SK-N-SH (cell line): ENCODE measurements at regions of chr9 and their contacts with region 1.

Region 1: DNA sequence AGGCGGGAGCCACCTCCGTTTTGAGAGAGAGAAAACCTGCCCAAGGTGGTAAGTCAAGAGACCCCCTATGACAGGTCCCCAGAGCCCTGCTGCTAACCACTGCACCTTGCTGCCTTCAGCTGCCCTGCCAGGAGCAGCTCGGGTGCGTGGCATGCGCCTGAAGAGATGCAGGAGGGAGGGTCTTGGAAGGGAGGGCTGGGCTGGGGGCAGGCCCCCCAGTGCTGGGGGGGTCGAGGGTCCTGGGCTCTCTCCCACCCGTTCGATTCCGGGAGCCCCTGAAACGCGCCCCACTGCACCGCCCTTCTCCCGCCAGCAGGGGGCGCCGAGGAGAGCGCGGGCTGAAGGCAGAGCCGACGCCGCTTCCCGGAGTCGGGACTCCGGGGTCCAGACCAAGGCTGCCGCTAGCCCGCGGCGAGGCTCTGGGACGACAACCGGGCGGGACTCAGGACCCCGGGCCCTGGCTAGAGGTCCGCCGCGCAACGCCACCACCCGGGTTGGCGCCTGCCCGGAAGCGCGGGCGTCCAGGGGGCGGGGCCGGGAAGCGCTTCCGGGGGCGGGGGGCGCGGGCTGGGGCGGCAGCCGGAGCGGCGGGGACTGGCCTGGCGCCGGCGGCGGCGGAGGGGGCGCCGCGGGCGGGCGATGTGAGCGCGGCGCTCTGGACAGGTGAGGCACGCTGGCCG is at the start of gene ZBTB34:
- DNase-seq: peak; percentile 96
- H3K4me3 ChIP-seq: peak within 1 kb of the TSS; percentile 90 to 96
- H3K27ac ChIP-seq: peak within 1 kb of the TSS; percentile 50 to 85
- H3K4me1 ChIP-seq: peaks cover 0 to 20% of the 10 kb centered on the region in 2 experiments; a peak in 2 of 4 replicates
- H3K27me3 ChIP-seq: peaks cover 5% of the 10 kb centered on the region; the same call in 1 of the 2 replicates
- CTCF ChIP-seq: peak; percentile 97
- EP300 ChIP-seq: no peak
- RAD21 ChIP-seq: 0 out of 2 replicates have a peak, but pooled peaks have one; percentile 4
- polyA plus RNA-seq, gene ZBTB34: 2.9 and 4.1 TPM in 2 replicates

Region 2: DNA sequence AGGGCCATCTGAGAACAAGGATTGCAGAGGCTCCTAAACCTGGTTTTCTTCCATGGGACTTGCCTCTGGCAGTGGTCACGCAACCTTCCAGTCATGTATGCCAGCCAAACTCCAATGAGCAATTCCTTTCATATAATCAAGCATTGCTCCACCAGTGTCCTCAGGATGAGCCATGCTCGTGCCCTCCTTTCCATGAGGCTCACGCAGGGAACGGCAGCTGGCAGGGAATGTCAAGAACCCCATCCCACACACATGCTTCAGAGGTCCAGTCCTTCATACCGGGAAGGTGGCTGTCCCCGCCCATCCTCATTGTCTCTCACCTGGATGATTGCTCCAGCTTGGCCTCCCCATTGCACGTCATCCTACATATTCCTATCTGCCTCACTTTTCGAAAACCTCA is 13.2 kb before region 1 on chr9:
- CTCF ChIA-PET with region 1: interaction called, 25 read pairs
- POLR2A ChIA-PET with region 1: interaction called, 6 read pairs
- DNase-seq: no peak
- H3K4me3 ChIP-seq: no peak overlapping the region
- H3K27ac ChIP-seq: no peak overlapping the region
- H3K4me1 ChIP-seq: peaks cover 0 to 11% of the 10 kb centered on the region in 2 experiments; a peak in 1 of 4 replicates
- H3K27me3 ChIP-seq: no peaks in the 10 kb centered on the region; the same call in 1 of the 2 replicates
- CTCF ChIP-seq: no peak
- EP300 ChIP-seq: no peak
- RAD21 ChIP-seq: no peak

Region 3: GRCh38 chr9:126872516-126872915 is 12.3 kb after region 1 on chr9:
- CTCF ChIA-PET with region 1: interaction called, 10 read pairs
- POLR2A ChIA-PET with region 1: no interaction called
- DNase-seq: no peak
- H3K4me3 ChIP-seq: no peak overlapping the region
- H3K27ac ChIP-seq: no peak overlapping the region
- H3K4me1 ChIP-seq: no peaks in the 10 kb centered on the region; a peak in 1 of 4 replicates
- H3K27me3 ChIP-seq: no peaks in the 10 kb centered on the region
- CTCF ChIP-seq: no peak
- EP300 ChIP-seq: no peak
- RAD21 ChIP-seq: no peak

Region 4: GRCh38 chr9:126906091-126906490 is 45.9 kb after region 1 on chr9:
- CTCF ChIA-PET with region 1: no interaction called
- POLR2A ChIA-PET with region 1: no interaction called
- DNase-seq: no peak
- H3K4me3 ChIP-seq: no peak overlapping the region
- H3K27ac ChIP-seq: no peak overlapping the region
- H3K4me1 ChIP-seq: no peaks in the 10 kb centered on the region
- H3K27me3 ChIP-seq: peaks cover 22% of the 10 kb centered on the region; the same call in 1 of the 2 replicates
- CTCF ChIP-seq: no peak
- EP300 ChIP-seq: no peak
- RAD21 ChIP-seq: no peak

Region 5: DNA sequence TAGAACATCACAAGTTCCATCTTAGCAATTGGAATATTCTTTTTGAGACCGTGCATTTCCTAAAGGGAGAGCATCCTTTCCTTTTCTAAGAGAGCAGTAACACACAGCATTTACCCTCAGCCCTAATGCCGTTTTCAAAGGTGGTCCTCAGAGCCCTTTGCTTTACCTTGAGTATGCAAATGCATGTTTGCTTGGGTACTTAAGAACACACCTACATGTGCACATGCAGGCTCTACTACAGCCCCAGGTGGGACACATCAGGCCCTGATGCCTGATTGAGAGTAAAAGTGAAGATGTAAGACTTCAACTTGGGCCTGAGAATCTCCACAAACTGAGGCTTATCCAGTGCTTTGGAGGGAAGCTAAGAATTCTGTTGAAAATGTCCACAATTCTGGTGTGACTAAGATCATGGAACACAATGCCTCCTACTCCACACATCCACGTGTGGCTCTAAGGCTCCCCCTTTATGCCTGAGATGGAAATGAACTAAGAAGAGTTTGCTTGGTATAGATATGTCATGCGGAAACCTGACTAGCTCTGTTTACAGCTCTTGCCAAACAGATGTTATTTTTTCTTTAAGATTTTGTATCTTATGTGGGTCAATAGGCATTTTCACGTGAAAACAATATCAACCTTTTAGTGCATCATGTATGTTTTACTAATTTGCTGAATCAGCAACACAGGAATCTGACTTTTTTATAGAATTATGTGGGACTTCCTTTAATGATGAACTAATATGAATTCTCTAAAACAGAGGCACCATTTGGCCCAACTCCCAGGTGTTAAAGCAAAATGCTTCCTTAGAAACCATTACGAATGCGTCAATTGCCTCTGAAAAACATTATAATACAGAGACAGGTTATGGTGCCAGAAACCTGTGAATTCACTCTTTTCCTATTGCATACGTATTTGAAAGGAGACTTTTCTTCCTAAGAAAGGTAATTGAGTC is 487.9 kb after region 1 on chr9:
- CTCF ChIA-PET with region 1: no interaction called
- POLR2A ChIA-PET with region 1: no interaction called
- DNase-seq: peak; percentile 55
- H3K4me3 ChIP-seq: no peak overlapping the region
- H3K27ac ChIP-seq: no peak overlapping the region
- H3K4me1 ChIP-seq: peaks cover 0 to 5% of the 10 kb centered on the region in 2 experiments; a peak in 2 of 4 replicates
- H3K27me3 ChIP-seq: no peaks in the 10 kb centered on the region
- CTCF ChIP-seq: peak; percentile 68
- EP300 ChIP-seq: no peak
- RAD21 ChIP-seq: peak; percentile 85